Activated CD8-positive, alpha-beta memory T cell treated with anti-CD3 and anti-CD28 coated beads, Interleukin-2, amount 10 ng/mL, durations not matched to agents 7 days and 5 days (primary cell): ENCODE measurements at regions of chr10 and their contacts with region 1.

Region 1: GRCh38 chr10:12710594-12711349 is 290.7 kb downstream of the CCDC3 start:
- DNase-seq: peak; percentile 86
- ATAC-seq: peak; percentile 92
- H3K4me3 Mint-ChIP-seq: no peak overlapping the region
- H3K27ac Mint-ChIP-seq: peak overlapping the region; percentile 67
- H3K4me1 Mint-ChIP-seq: peaks cover 51% of the 10 kb centered on the region
- H3K27me3 Mint-ChIP-seq: no peaks in the 10 kb centered on the region

Region 2: GRCh38 chr10:12699258-12699700 is 11.5 kb before region 1 on chr10:
- CTCF ChIA-PET with region 1: interaction called, 16 read pairs
- DNase-seq: peak; percentile 54
- ATAC-seq: no peak
- H3K4me3 Mint-ChIP-seq: no peak overlapping the region
- H3K27ac Mint-ChIP-seq: peak overlapping the region; percentile 65
- H3K4me1 Mint-ChIP-seq: peaks cover 23% of the 10 kb centered on the region
- H3K27me3 Mint-ChIP-seq: no peaks in the 10 kb centered on the region

Region 3: GRCh38 chr10:12757351-12757750 is 46.6 kb after region 1 on chr10:
- CTCF ChIA-PET with region 1: no interaction called
- DNase-seq: no peak
- ATAC-seq: no peak
- H3K4me3 Mint-ChIP-seq: no peak overlapping the region
- H3K27ac Mint-ChIP-seq: no peak overlapping the region
- H3K4me1 Mint-ChIP-seq: no peaks in the 10 kb centered on the region
- H3K27me3 Mint-ChIP-seq: no peaks in the 10 kb centered on the region